MCF 10A (cell line): ENCODE measurements at regions of chr19 and their contacts with region 1.

Region 1: DNA sequence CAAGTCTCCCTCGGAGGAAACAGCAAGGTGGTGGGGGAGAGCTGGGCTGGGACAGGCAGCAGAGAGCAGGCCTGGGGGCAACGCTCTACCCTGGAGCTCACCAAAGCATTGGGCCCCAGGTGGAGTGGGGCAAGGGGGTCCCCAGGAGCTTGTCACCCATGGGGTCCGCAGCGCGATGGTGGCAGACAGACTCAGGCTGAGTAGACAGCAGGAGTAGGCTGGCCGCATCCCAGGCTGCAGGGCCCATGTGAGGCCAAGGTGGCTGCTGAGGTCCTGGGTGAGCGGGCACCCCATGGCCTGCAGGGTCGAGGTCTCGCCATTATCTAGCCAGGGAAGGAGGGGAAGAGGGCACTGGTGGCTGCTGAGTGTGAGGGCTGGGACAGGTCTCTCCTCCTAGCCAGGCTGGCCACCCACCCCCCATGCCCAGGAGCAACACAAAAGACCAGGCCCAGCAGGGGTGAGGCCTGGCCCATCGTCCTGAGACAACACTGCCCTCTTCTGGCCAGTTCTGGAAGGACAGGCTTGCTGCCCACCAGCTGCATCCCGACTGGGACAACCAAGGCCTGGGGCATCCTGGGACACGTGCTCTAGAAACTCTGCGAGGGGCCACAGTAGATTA is 33.1 kb downstream of the CEBPG start:
- DNase-seq: peak; percentile 73
- H3K4me3 Mint-ChIP-seq: no peak overlapping the region
- H3K27ac Mint-ChIP-seq: no peak overlapping the region
- H3K4me1 Mint-ChIP-seq: no peaks in the 10 kb centered on the region
- H3K27me3 Mint-ChIP-seq: no peaks in the 10 kb centered on the region
- CTCF ChIP-seq: peak; percentile 95

Region 2: DNA sequence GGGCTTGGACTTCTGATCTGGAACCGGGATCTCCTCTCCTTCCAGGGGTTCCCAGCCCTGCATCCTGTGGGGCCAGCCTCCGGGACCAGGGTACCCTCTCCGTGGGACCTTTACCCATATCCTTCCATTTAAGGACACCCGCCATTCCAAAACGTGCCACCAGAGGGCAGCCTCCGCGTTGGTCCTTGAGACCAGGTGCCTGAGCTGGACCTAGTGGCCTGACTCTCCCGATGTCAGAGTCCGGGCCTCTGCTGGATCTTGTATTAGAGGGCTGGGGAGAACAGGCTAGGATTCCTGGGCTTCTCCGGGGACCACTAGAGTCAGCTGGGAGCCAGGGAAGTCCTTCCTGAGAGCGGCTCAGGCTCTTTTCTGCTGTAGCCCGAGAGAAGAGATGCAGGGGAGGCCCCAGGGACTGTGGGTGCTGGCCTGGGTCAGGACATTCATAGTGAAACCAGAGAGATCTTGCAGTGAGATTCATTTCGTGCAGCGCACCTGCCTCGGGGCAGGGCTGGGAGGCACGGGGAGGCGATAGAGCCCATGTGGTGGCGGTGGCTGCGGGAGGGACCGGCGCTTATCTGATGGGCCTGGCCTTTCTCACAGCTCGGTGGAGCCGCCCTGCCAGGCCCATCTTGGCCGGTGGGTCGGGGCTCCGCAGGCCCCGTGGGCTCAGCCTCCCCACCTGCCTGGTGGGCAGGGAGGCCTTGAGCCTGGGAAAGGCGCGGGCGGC is 171.2 kb before region 1 on chr19:
- CTCF ChIA-PET with region 1: interaction called, 530 read pairs
- POLR2A ChIA-PET with region 1: no interaction called
- intact Hi-C with region 1: loop called (anchors 1 kb)
- DNase-seq: peak; percentile 80
- H3K4me3 Mint-ChIP-seq: no peak overlapping the region
- H3K27ac Mint-ChIP-seq: no peak overlapping the region
- H3K4me1 Mint-ChIP-seq: no peaks in the 10 kb centered on the region
- H3K27me3 Mint-ChIP-seq: no peaks in the 10 kb centered on the region
- CTCF ChIP-seq: peak; percentile 86

Region 3: GRCh38 chr19:33332248-33332647 is 74.4 kb before region 1 on chr19:
- CTCF ChIA-PET with region 1: interaction called, 6 read pairs
- POLR2A ChIA-PET with region 1: no interaction called
- intact Hi-C with region 1: loop called (anchors 2 kb)
- DNase-seq: no peak
- H3K4me3 Mint-ChIP-seq: no peak overlapping the region
- H3K27ac Mint-ChIP-seq: no peak overlapping the region
- H3K4me1 Mint-ChIP-seq: peaks cover 8% of the 10 kb centered on the region
- H3K27me3 Mint-ChIP-seq: no peaks in the 10 kb centered on the region
- CTCF ChIP-seq: no peak

Region 4: GRCh38 chr19:33394006-33394849 is 12.4 kb before region 1 on chr19:
- CTCF ChIA-PET with region 1: interaction called, 33 read pairs
- POLR2A ChIA-PET with region 1: no interaction called
- intact Hi-C with region 1: no loop called
- DNase-seq: peak; percentile 89
- H3K4me3 Mint-ChIP-seq: no peak overlapping the region
- H3K27ac Mint-ChIP-seq: peak overlapping the region; percentile 51
- H3K4me1 Mint-ChIP-seq: peaks cover 17% of the 10 kb centered on the region
- H3K27me3 Mint-ChIP-seq: no peaks in the 10 kb centered on the region
- CTCF ChIP-seq: no peak